Sciatic nerve (tissue), 2 donors: ENCODE measurements at regions of chr22 and their contacts with region 1.

Region 1: DNA sequence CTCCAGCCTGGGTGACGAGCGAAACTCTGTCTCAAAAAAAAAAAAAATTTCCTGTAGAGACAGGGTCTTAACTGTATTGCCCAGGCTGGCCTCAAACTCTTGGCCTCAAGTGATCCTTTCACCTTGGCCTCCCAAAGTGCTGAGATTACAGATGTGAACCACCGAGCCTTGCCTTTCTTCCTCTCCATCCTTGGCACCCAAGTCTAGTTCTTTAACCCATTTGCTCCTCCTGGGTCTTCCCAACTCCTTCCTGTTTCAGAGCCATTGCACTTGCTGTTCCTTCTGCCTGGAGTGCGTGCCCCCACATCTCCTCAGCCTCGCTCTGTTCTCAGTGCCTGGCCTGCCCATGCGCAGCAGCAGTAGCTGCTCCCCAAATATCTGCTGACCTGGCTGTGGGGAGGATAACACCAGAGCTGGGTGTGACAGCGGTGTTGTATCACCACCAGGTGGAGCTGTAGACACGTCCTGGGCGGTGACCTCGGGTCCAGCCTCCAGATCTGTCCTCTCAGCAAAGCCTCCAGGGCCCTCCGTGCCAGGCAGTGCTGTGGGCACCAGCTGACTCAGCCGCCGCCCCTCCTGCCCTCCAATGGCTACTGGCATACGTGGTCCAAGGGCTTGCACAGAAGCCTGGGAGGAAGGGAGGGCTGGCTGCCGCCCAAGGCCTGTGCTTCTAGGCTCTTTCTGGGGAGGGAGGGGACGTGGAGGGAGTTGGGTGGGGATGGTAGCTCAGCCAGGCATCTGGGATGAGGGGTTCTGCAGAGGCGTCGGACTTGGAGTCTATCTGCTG is 22.0 kb downstream of the TEF start:
- DNase-seq: peak; percentile 93
- ATAC-seq: peak; percentile 94

Region 2: DNA sequence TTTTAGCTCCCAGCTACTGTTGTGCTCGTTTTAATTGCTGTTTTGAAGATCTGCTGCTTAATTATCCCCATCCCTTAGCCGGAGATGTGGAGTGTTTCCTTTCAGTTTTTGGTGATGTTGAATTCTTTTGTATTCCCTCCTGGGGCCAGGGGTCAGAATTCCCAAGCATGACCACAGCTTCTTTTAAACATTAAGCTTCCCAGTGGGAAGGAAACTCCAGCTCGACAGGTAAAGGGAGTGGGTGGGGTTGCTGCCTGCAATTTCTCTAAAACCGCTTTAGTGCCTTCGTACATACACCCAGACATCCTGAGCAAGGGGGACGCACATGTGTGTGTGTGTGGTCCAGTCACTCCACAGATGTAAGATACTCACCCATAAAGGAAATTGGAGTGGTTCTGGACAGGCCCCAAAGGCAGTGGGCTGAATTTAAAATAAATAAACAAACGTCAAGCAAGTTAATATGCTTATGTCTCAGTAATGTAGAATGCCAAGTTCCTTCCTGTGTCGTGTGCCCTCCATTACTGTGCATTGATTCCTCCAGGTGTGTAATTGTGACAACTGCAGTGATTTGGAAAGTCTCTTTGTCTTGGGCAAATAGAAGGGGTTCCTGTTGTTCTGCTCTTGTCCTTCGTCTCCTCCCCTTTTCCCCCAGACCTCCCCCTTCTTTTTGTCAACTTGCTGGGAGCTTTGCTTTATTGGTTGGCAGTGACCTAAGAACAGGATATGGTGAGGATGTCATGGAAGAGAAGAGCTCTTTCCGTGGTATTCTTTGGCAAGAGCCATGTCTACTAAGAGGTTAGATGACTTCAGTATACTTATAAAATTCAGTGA is 1076.6 kb before region 1 on chr22:
- intact Hi-C with region 1: no loop called
- DNase-seq: no peak
- ATAC-seq: no peak

Region 3: DNA sequence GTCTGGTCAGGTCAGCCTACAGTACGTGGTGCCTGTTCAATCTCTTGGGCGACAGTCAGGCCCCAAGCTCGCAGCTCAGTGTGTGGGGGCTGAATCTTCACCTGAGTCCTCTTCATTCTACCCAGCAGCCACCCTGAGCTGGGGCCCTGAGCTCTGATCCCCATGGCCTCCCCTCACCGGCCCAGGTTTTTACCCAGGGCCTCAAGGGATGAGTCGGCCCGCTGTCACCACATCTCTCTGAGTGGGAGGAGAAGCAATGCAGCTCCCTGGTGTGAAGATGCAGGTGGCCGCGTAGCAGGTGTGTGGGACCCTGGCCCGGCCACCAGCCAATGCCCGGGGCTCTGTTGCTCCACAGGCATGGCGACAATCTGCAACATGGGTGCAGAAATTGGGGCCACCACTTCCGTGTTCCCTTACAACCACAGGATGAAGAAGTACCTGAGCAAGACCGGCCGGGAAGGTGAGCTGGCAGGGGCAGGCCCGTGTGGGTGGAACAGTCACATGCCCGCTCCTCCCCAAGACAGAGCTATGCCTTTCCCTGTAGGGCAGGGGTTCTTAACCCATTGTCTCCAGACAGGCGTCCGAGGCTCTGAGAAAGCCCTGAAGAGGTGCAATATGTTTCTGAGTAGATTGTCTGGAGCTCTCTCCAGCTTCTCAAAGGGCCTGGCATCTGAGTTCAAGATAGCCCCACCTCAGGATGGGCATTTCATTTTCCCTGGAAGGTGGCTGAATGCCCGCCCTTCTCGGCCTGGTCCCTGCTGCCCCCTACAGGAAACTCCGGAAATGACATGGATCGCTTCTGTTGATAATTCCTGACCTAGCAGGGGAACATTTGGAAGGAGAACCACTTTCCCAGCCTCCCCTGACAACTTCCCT is 113.7 kb after region 1 on chr22:
- intact Hi-C with region 1: loop called (anchors 5 kb)
- DNase-seq: peak; percentile 90
- ATAC-seq: peak; percentile 59